MCF 10A (cell line): ENCODE measurements at regions of chr12 and their contacts with region 1.

Region 1: GRCh38 chr12:111812881-111813741 is 28.9 kb upstream of the MAPKAPK5 start:
- DNase-seq: peak; percentile 91
- H3K4me3 Mint-ChIP-seq: no peak overlapping the region
- H3K27ac Mint-ChIP-seq: no peak overlapping the region
- H3K4me1 Mint-ChIP-seq: peaks cover 6% of the 10 kb centered on the region
- H3K27me3 Mint-ChIP-seq: no peaks in the 10 kb centered on the region
- CTCF ChIP-seq: peak; percentile 77

Region 2: GRCh38 chr12:111685744-111686517 is 127.2 kb before region 1 on chr12 and contains the starts of genes ACAD10 and BRAP:
- CTCF ChIA-PET with region 1: interaction called, 6 read pairs
- POLR2A ChIA-PET with region 1: interaction called, 10 read pairs
- intact Hi-C with region 1: loop called (anchors 2 kb)
- DNase-seq: peak; percentile 93
- H3K4me3 Mint-ChIP-seq: peak within 1 kb of the TSS; percentile 93
- H3K27ac Mint-ChIP-seq: peak within 1 kb of the TSS; percentile 93
- H3K4me1 Mint-ChIP-seq: peaks cover 17% of the 10 kb centered on the region
- H3K27me3 Mint-ChIP-seq: no peaks in the 10 kb centered on the region
- CTCF ChIP-seq: no peak
- total RNA-seq, gene ACAD10: 25.4 and 31.0 TPM in 2 replicates
- total RNA-seq, gene BRAP: 22.1 and 24.4 TPM in 2 replicates

Region 3: DNA sequence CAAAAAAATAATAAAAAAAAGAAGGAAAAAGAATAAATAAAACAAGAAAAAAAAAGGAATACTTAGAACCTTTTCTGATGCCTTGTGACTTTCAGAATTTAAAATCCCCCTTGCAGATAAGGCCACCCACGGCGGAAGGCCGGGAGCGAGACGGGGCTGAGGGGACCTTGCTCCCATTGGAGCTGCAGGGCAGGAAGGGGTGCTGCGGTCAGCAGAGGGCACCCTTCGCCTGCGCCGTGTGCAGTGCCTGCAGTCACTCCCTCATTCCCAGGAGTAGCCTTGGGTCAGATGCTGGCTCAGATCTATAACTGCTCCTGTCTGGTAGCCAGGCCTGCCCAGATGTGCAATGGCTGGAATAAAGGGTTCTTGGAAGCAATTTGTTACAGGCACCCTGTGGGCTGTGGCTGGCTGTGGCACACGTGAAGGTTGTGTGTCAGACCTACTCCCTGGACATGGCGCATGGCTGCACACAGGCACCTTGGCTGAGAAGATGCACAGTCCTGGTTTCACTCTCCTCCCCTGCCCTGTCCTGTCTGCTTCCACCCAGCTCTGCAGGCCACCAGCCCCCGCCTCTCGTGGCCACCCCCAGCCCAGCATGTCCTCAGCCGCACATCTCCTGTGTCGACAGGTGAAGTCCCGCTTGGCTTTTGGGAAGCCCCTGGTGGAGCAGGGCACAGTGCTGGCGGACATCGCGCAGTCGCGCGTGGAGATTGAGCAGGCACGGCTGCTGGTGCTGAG is 59.8 kb before region 1 on chr12:
- CTCF ChIA-PET with region 1: interaction called, 65 read pairs
- POLR2A ChIA-PET with region 1: interaction called, 5 read pairs
- intact Hi-C with region 1: loop called (anchors 1 kb)
- DNase-seq: peak; percentile 55
- H3K4me3 Mint-ChIP-seq: no peak overlapping the region
- H3K27ac Mint-ChIP-seq: no peak overlapping the region
- H3K4me1 Mint-ChIP-seq: no peaks in the 10 kb centered on the region
- H3K27me3 Mint-ChIP-seq: no peaks in the 10 kb centered on the region
- CTCF ChIP-seq: peak; percentile 64

Region 4: GRCh38 chr12:111775205-111776193 is 37.6 kb before region 1 on chr12:
- CTCF ChIA-PET with region 1: interaction called, 10 read pairs
- POLR2A ChIA-PET with region 1: interaction called, 5 read pairs
- intact Hi-C with region 1: no loop called
- DNase-seq: peak; percentile 89
- H3K4me3 Mint-ChIP-seq: peak overlapping the region; percentile 63
- H3K27ac Mint-ChIP-seq: peak overlapping the region; percentile 93
- H3K4me1 Mint-ChIP-seq: peaks cover 24% of the 10 kb centered on the region
- H3K27me3 Mint-ChIP-seq: no peaks in the 10 kb centered on the region
- CTCF ChIP-seq: no peak

Region 5: GRCh38 chr12:111841750-111842555 is 28.8 kb after region 1 on chr12 and contains the start of gene MAPKAPK5:
- CTCF ChIA-PET with region 1: interaction called, 4 read pairs
- POLR2A ChIA-PET with region 1: interaction called, 17 read pairs
- intact Hi-C with region 1: no loop called
- DNase-seq: peak; percentile 92
- H3K4me3 Mint-ChIP-seq: peak within 1 kb of the TSS; percentile 93
- H3K27ac Mint-ChIP-seq: peak within 1 kb of the TSS; percentile 99
- H3K4me1 Mint-ChIP-seq: peaks cover 26% of the 10 kb centered on the region
- H3K27me3 Mint-ChIP-seq: no peaks in the 10 kb centered on the region
- CTCF ChIP-seq: no peak
- total RNA-seq, gene MAPKAPK5: 46.3 and 51.3 TPM in 2 replicates

Region 6: DNA sequence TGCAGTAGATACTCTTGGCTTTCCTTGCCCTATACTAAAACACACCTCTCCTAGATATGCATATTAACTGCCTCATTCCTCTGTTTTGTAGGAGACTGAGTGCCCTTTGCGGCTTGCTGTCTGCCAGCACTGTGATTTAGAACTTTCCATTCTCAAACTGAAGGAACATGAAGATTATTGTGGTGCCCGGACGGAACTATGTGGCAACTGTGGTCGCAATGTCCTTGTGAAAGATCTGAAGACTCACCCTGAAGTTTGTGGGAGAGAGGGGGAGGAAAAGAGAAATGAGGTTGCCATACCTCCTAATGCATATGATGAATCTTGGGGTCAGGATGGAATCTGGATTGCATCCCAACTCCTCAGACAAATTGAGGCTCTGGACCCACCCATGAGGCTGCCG is 327.6 kb after region 1 on chr12:
- CTCF ChIA-PET with region 1: no interaction called
- POLR2A ChIA-PET with region 1: no interaction called
- intact Hi-C with region 1: no loop called
- DNase-seq: no peak
- H3K4me3 Mint-ChIP-seq: no peak overlapping the region
- H3K27ac Mint-ChIP-seq: no peak overlapping the region
- H3K4me1 Mint-ChIP-seq: no peaks in the 10 kb centered on the region
- H3K27me3 Mint-ChIP-seq: no peaks in the 10 kb centered on the region
- CTCF ChIP-seq: no peak